Activated naive CD4-positive, alpha-beta T cell treated with anti-CD3 and anti-CD28 coated beads, Interleukin-2, amount 10 ng/mL, durations not matched to agents 7 days and 5 days (primary cell): ENCODE measurements at regions of chr2 and their contacts with region 1.

Region 1: DNA sequence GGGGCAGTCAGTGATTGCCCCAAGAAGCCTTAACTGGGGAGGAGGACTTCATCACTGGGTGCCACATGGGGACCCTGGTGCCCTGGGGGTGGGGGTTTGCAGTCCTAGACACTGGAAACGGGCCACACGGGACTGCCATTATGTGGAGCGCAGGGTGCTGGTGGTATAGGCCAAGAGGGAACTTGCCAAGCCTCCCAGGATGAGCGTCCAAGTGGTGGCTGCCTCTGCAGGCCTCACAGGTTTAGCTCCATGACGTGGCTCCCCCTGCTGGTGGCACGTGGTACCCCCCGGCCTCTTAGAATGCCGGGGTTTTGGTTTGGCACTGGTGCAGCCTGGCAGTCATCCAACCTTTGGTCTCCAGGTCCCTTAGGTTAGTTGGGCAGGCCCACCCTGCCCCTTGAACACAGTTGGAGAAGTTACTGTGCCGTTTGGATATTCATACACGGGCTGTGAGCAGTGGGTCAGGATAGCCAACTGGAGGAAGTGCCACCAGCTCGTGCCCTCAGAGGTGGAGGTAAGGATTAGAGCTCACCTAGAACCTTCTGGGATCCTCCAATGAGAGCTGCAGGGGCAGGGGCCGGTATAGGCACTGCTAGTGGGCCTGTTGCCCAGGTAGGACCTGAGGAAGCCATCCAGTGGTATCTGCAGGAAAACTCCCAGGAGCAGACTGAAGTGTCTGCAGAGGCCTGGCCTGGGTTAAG is 5.6 kb downstream of the PTMA start:
- DNase-seq: peak; percentile 93
- H3K4me3 Mint-ChIP-seq: peak overlapping the region; percentile 31
- H3K27ac Mint-ChIP-seq: peak overlapping the region; percentile 86
- H3K4me1 Mint-ChIP-seq: peaks cover 34% of the 10 kb centered on the region
- H3K27me3 Mint-ChIP-seq: no peaks in the 10 kb centered on the region

Region 2: GRCh38 chr2:231503766-231504165 is 210.1 kb before region 1 on chr2:
- CTCF ChIA-PET with region 1: no interaction called
- DNase-seq: no peak
- H3K4me3 Mint-ChIP-seq: no peak overlapping the region
- H3K27ac Mint-ChIP-seq: no peak overlapping the region
- H3K4me1 Mint-ChIP-seq: no peaks in the 10 kb centered on the region
- H3K27me3 Mint-ChIP-seq: no peaks in the 10 kb centered on the region

Region 3: DNA sequence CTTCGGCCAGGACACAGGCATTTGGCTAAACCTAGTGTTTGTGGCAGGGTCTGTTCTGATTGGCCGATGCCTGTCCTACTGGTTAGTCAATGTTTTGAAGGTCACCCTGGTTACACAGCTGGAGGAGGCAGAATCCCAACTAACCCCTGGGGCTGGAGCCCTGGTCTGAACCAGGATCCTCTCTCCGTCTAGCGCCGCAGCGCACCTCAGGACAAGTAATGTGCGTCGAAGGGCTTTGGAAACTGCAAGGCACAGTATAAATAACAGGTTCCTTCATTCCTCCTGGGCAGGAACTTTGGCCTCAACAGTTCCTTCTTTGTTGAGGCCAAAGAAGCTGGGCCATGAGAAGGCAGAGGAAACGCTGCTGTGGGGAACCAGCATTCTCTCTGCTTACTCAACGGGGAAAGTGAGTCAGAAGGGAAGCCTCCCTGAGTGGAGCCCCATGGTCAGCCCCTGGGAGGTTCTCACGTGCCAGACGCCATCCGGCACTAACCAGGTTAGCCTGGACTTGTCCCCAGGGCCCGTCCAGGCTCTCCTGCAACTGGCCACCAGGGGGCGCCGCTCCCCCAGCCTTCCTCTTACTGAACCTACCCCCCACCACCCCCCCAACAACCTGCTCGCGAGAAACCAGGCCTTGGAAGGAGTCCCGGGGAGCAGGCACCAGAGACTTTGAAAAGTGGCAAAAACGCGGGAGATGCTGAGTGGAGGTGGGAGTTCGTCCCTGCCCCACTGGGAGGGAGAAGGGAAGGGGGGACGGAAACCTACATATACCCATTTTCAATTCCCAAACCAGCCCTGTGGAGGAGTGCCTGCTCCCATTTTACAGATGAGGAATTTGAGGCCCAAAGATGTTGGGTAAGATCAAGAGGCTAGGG is 101.5 kb before region 1 on chr2:
- CTCF ChIA-PET with region 1: interaction called, 213 read pairs
- DNase-seq: peak; percentile 94
- H3K4me3 Mint-ChIP-seq: peak overlapping the region; percentile 78
- H3K27ac Mint-ChIP-seq: peak overlapping the region; percentile 97
- H3K4me1 Mint-ChIP-seq: peaks cover 64% of the 10 kb centered on the region
- H3K27me3 Mint-ChIP-seq: peaks cover 28% of the 10 kb centered on the region

Region 4: DNA sequence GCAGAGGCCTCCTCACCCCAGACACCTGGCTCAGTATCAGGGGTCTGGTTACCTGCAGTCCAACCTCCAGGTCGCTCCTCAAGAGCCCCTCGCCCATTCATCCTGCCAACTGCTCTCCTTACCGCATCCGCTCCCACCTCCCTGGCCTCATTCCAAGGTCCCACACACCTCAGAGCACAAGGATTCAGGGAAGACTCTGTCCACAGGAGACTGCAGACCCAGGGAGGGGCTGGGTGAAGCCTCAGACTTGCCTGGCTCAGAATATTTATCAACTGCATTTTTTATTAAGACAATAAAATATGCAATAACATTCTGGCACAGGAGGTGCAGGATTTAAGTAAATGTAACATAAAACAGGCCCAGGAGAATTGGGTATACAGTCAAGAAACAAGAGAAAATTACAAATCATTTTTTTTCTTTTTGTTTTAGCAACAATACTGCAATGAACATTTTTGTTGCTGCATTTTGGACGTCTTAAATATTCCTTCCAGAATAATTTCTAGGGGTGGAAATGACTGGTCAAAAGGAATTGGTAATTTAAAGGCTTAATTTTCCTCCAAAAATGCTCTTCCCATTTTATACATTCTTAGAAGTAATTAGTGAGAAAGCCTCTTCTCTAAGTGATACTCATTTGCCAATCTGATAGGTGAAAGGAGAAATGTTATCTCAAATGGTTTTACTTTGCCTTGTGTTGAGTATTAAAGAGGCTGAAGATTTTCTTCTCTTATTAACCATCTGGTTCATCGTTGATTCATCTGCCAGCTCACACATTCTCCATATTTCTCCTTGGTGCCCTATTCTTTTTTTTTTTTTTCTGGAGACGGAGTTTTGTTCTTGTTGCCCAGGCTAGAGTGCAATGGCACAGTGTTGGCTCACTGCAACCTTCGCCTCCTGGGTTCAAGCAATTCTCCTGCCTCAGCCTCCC is 78.7 kb before region 1 on chr2:
- CTCF ChIA-PET with region 1: no interaction called
- DNase-seq: no peak
- H3K4me3 Mint-ChIP-seq: no peak overlapping the region
- H3K27ac Mint-ChIP-seq: no peak overlapping the region
- H3K4me1 Mint-ChIP-seq: peaks cover 6% of the 10 kb centered on the region
- H3K27me3 Mint-ChIP-seq: peaks cover 27% of the 10 kb centered on the region

Region 5: GRCh38 chr2:231648587-231649174 is 65.2 kb before region 1 on chr2:
- CTCF ChIA-PET with region 1: interaction called, 32 read pairs
- DNase-seq: peak; percentile 75
- H3K4me3 Mint-ChIP-seq: no peak overlapping the region
- H3K27ac Mint-ChIP-seq: no peak overlapping the region
- H3K4me1 Mint-ChIP-seq: peaks cover 6% of the 10 kb centered on the region
- H3K27me3 Mint-ChIP-seq: peaks cover 28% of the 10 kb centered on the region

Region 6: DNA sequence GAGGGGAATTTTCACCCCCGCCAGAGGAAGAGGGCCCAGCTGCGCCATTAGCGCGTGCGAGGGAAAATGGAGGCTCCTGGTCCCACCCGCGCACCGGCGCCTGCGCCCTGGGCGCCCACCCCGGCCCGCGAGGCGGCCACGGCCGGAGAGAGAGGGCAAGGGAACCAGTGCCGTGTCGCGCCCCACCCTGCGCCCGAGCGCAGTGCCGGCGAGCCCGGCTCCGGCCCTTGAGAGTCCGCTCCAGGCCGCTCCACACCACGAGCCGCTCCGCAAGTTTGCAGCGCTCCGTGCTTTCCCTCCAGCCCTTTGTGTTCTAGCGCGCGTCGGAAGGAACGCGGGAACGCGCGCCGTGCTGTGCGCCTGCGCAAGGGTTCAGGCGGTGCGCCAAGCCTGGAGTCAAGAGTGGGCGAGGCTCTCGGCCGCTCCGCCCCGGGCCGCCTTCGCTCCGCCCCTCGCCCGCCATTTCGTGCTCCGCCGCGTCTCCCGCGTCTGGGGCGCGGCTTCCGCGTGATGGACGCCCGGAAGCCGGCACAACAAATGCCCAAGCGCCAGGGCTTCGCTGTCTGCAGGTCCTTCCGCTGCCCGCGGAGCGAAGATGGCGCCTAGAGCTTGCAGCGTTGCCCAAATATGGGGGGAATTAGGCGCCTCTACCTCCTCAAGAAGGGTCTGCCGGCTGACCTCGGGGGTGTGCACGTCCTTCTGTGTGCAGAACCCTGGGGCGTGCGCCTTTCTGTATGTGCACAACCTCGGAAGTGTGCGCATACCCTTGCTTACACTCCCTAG is 51.7 kb before region 1 on chr2:
- CTCF ChIA-PET with region 1: interaction called, 13 read pairs
- DNase-seq: peak; percentile 96
- H3K4me3 Mint-ChIP-seq: peak overlapping the region; percentile 67
- H3K27ac Mint-ChIP-seq: peak overlapping the region; percentile 97
- H3K4me1 Mint-ChIP-seq: peaks cover 50% of the 10 kb centered on the region
- H3K27me3 Mint-ChIP-seq: peaks cover 11% of the 10 kb centered on the region

Region 7: DNA sequence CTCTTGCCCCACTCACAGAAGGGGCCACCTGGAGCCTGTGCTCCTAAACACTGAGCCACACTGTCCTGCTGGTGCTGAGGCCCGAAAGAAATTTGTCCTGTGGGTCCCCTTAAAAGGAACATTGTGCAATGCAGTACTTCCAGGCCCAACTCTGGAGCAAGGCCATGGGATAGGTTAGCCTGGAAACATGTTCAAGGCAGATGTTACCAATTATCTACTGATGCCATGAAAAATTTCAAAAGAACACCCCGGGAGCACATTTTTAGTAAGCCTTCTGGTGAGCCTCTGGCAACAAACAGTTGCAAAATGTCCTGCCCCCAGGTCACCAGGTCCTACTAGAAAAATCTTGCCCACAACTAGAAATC is 17.9 kb before region 1 on chr2:
- CTCF ChIA-PET with region 1: interaction called, 473 read pairs
- DNase-seq: no peak
- H3K4me3 Mint-ChIP-seq: no peak overlapping the region
- H3K27ac Mint-ChIP-seq: no peak overlapping the region
- H3K4me1 Mint-ChIP-seq: no peaks in the 10 kb centered on the region
- H3K27me3 Mint-ChIP-seq: peaks cover 50% of the 10 kb centered on the region

Region 8: GRCh38 chr2:231701456-231702373 is 12.2 kb before region 1 on chr2:
- CTCF ChIA-PET with region 1: interaction called, 28 read pairs
- DNase-seq: no peak
- H3K4me3 Mint-ChIP-seq: no peak overlapping the region
- H3K27ac Mint-ChIP-seq: no peak overlapping the region
- H3K4me1 Mint-ChIP-seq: peaks cover 16% of the 10 kb centered on the region
- H3K27me3 Mint-ChIP-seq: peaks cover 27% of the 10 kb centered on the region

Region 9: DNA sequence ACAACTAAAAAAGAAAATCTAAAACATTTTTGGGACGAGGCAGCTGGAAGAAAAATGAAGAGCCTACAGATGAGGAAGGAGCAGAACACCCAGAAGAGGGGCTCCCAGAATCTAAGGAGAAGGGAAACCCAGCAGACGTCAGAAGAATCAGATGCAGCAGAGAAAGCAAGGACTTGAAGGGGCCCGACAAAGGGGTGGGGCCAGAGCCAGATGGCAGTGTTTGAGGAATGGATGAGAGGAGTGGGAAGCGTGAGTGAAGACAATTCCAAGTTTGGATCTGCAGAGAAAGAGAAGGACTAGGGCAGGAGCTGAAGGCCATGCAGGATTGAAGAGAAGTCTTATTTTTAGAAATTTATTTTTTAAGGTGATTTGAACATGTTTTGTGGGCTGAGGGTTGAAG is 13.7 kb after region 1 on chr2:
- CTCF ChIA-PET with region 1: interaction called, 33 read pairs
- DNase-seq: no peak
- H3K4me3 Mint-ChIP-seq: no peak overlapping the region
- H3K27ac Mint-ChIP-seq: no peak overlapping the region
- H3K4me1 Mint-ChIP-seq: peaks cover 2% of the 10 kb centered on the region
- H3K27me3 Mint-ChIP-seq: no peaks in the 10 kb centered on the region